ENCODE measurements at regions of chr1 and their contacts with region 1.

Region 1: DNA sequence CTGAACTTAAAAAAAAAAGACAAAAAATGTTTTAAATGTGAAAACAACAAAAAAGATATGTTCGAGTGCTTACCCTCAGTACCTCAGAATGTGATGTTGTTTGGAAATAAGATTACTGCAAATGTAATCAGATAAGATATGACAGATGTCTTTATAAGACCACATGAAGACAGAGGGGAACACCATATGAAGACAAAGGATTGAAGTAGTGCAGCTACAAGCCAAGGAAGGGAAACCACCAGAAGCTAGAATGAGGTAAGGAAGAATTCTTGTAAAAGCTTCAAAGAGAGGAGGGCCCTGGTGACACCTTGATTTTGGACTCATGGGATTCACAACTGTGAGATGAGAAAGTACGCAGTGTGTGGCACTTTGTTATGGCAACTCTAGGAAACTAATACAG is 15.4 kb downstream of the ASB17 start:
- DNase-seq: no peak
- H3K4me3 Mint-ChIP-seq: no peak overlapping the region
- H3K27ac Mint-ChIP-seq: no peak overlapping the region
- H3K4me1 Mint-ChIP-seq: no peaks in the 10 kb centered on the region
- H3K27me3 Mint-ChIP-seq: no peaks in the 10 kb centered on the region
- CTCF ChIP-seq: no peak

Region 2: DNA sequence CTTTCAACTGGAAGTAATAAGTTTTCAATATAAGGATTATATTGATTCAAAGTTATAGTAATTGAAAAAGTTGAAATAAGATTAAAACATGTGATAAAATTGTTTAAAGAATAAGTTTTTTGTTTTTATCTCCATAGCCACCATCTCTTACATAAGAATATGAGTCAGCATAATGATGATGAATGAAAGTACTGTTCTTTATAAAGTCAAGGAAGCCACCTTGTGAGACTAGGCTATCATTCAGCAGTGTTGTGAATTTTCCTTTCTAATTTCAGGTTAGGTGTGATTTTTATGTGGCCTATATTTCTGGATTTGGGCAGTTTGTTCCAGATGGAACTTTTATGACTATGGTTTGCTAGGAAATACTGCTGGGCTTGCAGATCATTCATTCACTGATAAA is 37.8 kb after region 1 on chr1:
- CTCF ChIA-PET with region 1: no interaction called
- intact Hi-C with region 1: no loop called
- DNase-seq: peak; percentile 2
- H3K4me3 Mint-ChIP-seq: no peak overlapping the region
- H3K27ac Mint-ChIP-seq: peak overlapping the region; percentile 95
- H3K4me1 Mint-ChIP-seq: peaks cover 60% of the 10 kb centered on the region
- H3K27me3 Mint-ChIP-seq: no peaks in the 10 kb centered on the region
- CTCF ChIP-seq: no peak

Region 3: DNA sequence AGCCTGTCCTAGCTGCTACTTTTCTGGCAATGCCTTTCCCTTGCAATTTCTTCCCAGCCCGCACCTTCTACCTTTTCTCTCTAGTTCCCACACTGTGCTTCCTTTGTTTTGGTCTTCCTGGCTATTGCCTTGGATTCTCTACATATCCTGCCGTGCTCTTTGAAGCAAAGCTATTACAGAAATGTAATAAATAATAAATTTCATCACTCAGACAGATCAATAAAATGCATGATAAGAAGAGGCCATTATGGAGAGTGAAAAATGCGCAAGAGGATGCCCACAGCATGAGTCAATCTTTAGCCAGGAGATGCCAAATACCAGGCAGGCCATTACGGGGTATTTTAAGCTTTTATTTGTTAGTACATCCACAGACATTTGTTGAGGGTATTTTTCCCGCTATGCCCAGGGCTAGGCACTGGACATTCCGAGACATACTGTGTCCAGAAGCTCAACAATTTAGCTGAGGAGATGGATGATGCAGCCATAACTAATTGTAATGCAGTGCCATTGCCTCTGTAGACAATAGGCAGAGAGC is 321.3 kb after region 1 on chr1:
- CTCF ChIA-PET with region 1: no interaction called
- intact Hi-C with region 1: loop called (anchors 10 kb)
- DNase-seq: peak; percentile 50
- H3K4me3 Mint-ChIP-seq: peak overlapping the region; percentile 25
- H3K27ac Mint-ChIP-seq: peak overlapping the region; percentile 45
- H3K4me1 Mint-ChIP-seq: peaks cover 35% of the 10 kb centered on the region
- H3K27me3 Mint-ChIP-seq: no peaks in the 10 kb centered on the region
- CTCF ChIP-seq: no peak